Naive thymus-derived CD8-positive, alpha-beta T cell (primary cell): ENCODE measurements at regions of chr14 and their contacts with region 1.

Region 1: DNA sequence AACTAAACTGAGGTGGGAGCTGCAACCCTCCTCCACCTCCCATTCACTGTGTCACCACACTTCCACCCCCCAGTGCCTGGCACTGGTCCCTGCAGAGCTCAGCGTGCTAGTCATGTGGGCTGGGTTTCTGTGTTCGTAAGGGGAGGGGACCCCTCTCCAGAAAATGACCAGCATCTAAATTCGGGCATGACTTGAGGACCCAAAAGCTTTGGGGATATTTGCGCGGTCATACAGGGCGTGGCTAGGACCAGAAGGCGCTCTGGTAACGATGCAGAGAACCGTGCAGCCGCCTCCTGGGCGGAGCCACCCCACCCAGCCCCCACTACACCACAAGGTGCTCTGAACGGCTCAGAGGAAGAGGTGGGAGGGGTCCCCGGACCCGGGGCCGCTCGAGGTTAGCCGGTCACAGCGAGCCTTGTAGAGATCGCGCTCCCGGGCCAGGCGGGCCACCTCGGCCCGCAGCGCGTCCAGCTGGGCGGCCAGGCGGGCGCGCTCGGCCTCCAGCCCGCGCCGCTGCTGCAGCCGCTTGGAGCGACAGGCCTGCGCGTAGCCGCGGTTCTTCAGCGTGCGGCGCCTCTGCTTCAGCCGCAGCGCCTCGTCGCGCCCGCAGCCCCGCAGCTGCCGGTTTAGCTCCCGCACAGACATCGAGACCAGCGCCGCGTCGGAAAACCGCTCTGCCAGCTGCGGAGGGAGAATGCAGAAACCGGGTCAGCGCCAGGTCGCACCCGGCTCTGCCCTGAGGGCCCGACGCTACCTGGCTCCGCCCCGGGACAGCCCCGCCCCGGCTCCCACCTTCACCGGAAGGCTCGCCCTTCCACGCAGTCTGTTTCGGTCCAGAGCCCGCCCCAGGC is 9.8 kb downstream of the CPNE6 start:
- DNase-seq: peak; percentile 45 to 84 (median 66)
- ATAC-seq: peak; percentile 90
- H3K4me3 Mint-ChIP-seq: peak overlapping the region; percentile 84 to 94 (median 87)
- H3K27ac Mint-ChIP-seq: peak overlapping the region; percentile 67 to 95 (median 90)
- H3K4me1 Mint-ChIP-seq: peaks cover 13 to 28% (median 22%) of the 10 kb centered on the region in 4 donors
- H3K27me3 Mint-ChIP-seq: no peaks in the 10 kb centered on the region

Region 2: GRCh38 chr14:24051789-24052655 is 29.1 kb before region 1 on chr14 and contains the start of gene CARMIL3:
- POLR2A ChIA-PET with region 1: interaction called, 10 read pairs
- DNase-seq: peak in 9 of 10 donors; percentile 27 to 66 (median 55)
- ATAC-seq: peak; percentile 79 to 89
- H3K4me3 Mint-ChIP-seq: peak within 1 kb of the TSS; percentile 73 to 90 (median 85)
- H3K27ac Mint-ChIP-seq: peak within 1 kb of the TSS in 9 of 10 donors; percentile 7 to 89 (median 56)
- H3K4me1 Mint-ChIP-seq: peaks cover 9 to 33% (median 18%) of the 10 kb centered on the region in 4 donors
- H3K27me3 Mint-ChIP-seq: peaks cover 11 to 31% (median 15%) of the 10 kb centered on the region in 5 donors
- polyA plus RNA-seq, gene CARMIL3: 0.03 TPM in 1 of 3 donors, not detected in the others

Region 3: DNA sequence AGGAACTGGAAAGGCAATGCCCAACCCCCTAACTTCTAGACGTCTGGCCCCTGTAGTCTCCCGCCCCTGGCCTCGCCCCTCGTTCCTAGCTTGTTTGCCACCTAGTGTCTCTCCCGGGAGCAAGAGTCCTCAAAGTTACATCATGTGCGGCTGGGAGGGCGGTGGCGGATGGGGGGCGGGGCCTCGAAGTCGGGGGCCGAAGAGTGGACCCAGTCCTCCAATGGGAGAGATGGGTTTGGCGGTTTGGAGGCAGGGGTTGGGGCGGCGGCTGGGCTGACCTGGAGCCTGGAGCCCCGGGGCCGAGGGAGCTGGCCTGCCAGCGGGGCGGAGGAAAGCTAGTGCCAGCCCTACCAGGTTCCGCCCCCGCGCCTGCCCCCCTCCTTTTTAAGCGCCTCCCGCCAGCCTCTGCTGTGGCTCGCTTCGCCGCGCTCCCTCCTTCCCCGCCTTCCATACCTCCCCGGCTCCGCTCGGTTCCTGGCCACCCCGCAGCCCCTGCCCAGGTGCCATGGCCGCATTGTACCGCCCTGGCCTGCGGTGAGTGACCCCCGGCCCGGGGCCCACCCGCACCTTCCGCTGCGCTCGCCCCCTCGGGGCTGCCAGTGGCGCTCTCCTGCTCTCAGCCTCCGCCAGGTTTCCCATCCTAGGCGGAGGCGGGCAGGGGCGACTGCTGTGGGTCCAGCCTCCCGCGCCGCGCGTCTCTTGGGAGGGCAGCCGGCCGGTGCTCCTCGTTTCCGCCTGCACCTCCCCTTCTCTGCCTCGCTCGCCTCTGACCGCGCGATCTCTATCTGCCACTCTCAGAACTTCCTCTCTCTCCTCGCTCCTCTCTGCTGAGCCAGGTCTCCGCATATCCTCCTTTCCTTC is 13.0 kb after region 1 on chr14 and contains the start of gene PCK2:
- POLR2A ChIA-PET with region 1: interaction called, 50 read pairs
- DNase-seq: peak; percentile 40 to 78 (median 62)
- ATAC-seq: peak; percentile 78 to 83
- H3K4me3 Mint-ChIP-seq: peak within 1 kb of the TSS; percentile 95 to 99 (median 98)
- H3K27ac Mint-ChIP-seq: peak within 1 kb of the TSS; percentile 93 to 99 (median 97)
- H3K4me1 Mint-ChIP-seq: peaks cover 29 to 40% (median 34%) of the 10 kb centered on the region in 4 donors
- H3K27me3 Mint-ChIP-seq: no peaks in the 10 kb centered on the region
- polyA plus RNA-seq, gene PCK2: 8.6 to 11.6 (median 11.3) TPM

Region 4: GRCh38 chr14:24108336-24108874 is 27.3 kb after region 1 on chr14:
- POLR2A ChIA-PET with region 1: interaction called, 28 read pairs
- DNase-seq: no peak
- ATAC-seq: peak; percentile 31 to 32
- H3K4me3 Mint-ChIP-seq: peak overlapping the region in 8 of 10 donors; percentile 2 to 57 (median 32)
- H3K27ac Mint-ChIP-seq: peak overlapping the region; percentile 83 to 98 (median 94)
- H3K4me1 Mint-ChIP-seq: peaks cover 5 to 24% (median 11%) of the 10 kb centered on the region in 4 donors
- H3K27me3 Mint-ChIP-seq: no peaks in the 10 kb centered on the region

Region 5: GRCh38 chr14:24135834-24136542 is 54.9 kb after region 1 on chr14 and contains the start of gene PSME1:
- POLR2A ChIA-PET with region 1: interaction called, 17 read pairs
- DNase-seq: peak; percentile 88 to 96 (median 94)
- ATAC-seq: peak; percentile 88 to 94
- H3K4me3 Mint-ChIP-seq: peak within 1 kb of the TSS; percentile 87 to 98 (median 93)
- H3K27ac Mint-ChIP-seq: peak within 1 kb of the TSS; percentile 86 to 97 (median 94)
- H3K4me1 Mint-ChIP-seq: peaks cover 34 to 69% (median 66%) of the 10 kb centered on the region in 4 donors
- H3K27me3 Mint-ChIP-seq: no peaks in the 10 kb centered on the region
- polyA plus RNA-seq, gene PSME1: 681 to 767 (median 753) TPM

Region 6: GRCh38 chr14:24508155-24508840 is 427.2 kb after region 1 on chr14 and contains the start of gene CMA1:
- POLR2A ChIA-PET with region 1: no interaction called
- DNase-seq: no peak
- ATAC-seq: no peak
- H3K4me3 Mint-ChIP-seq: no peak within 1 kb of the TSS
- H3K27ac Mint-ChIP-seq: no peak within 1 kb of the TSS
- H3K4me1 Mint-ChIP-seq: no peaks in the 10 kb centered on the region
- H3K27me3 Mint-ChIP-seq: peaks cover 9 to 28% (median 11%) of the 10 kb centered on the region in 5 donors
- polyA plus RNA-seq, gene CMA1: not detected